ENCODE measurements at regions of chr14 and their contacts with region 1.

Region 1: DNA sequence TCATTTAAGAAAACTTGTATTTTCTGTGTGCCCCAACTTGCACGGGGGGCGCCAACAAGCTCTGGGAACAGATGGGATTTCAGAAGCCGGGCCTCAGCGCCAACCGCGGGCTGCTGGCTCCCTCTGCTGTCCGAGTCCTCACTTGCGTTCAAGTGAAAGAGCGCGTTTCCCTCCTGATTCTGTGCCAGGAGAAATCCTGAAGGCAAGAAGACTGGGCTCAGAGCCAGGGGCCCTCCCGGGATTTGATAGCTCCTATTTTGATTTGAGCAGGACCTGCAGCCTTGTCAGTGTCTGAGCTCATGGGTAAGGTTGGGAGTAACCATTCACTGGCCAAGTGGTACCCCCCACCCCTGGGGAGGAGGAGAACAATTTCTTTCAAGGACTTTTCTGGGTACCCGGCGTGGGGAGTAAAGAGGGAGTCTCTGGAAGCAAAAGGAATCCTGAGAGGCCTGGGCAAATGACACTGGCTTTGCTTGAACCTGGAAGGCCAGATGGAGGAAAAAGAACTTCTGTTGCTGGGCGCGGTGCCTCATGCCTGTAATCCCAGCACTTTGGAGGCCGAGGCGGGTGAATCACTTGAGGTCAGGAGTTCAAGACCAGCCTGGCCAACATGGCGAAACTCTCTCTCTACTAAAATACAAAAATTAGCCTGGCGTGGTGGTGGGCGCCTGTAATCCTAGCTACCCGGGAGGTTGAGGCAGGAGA is 179.0 kb upstream of the RGS6 start:
- DNase-seq: peak; percentile 81
- H3K4me3 ChIP-seq: no peak overlapping the region
- H3K27ac ChIP-seq: no peak overlapping the region
- H3K4me1 ChIP-seq: peaks cover 8% of the 10 kb centered on the region
- CTCF ChIP-seq: peak; percentile 98

Region 2: GRCh38 chr14:71103662-71104484 is 649.4 kb before region 1 on chr14:
- CTCF ChIA-PET with region 1: no interaction called
- POLR2A ChIA-PET with region 1: no interaction called
- intact Hi-C with region 1: loop called (anchors 1 kb)
- DNase-seq: peak; percentile 80
- H3K4me3 ChIP-seq: no peak overlapping the region
- H3K27ac ChIP-seq: no peak overlapping the region
- H3K4me1 ChIP-seq: no peaks in the 10 kb centered on the region
- CTCF ChIP-seq: peak; percentile 99

Region 3: DNA sequence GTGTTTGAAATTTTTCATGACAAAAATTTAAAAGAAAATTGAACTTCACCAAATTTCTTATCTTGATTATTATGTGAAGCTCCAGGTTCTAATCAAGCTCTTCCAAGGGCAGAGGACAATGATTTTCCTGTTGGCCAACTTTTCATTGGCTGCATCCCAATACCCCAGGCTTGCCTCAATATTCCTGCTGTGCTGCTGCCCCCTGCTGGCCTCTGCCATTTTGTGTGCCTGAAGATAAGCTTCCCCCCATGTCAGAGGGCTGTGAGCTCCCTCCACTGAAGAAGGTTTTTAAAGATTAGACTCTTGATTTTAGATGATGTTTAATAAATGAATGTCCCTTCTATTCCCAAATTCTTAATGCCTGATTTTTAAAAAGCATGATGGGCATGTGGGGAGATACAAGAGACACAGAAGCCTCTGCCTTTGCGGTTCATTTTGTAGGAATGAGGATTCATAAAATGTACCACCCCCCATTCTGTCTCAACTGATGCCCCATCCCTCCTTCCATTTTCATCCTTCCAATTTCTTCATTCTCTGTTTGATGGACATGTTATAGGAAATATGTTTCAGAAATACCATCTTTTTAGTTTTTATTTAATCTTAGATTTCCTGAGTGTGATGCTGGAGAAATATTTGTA is 102.2 kb after region 1 on chr14:
- CTCF ChIA-PET with region 1: no interaction called
- POLR2A ChIA-PET with region 1: no interaction called
- intact Hi-C with region 1: loop called (anchors 10 kb)
- DNase-seq: peak; percentile 70
- H3K4me3 ChIP-seq: peak overlapping the region; percentile 22
- H3K27ac ChIP-seq: peak overlapping the region; percentile 62
- H3K4me1 ChIP-seq: peaks cover 19% of the 10 kb centered on the region
- CTCF ChIP-seq: peak; percentile 97

Measured in OCI-LY7 (cell line).